Left cardiac atrium (tissue), 4 donors: ENCODE measurements at regions of chr11 and their contacts with region 1.

Region 1: GRCh38 chr11:111819161-111819828 is 52.1 kb downstream of the ALG9 start:
- DNase-seq: peak; percentile 55
- ATAC-seq: peak; percentile 87 to 88

Region 2: DNA sequence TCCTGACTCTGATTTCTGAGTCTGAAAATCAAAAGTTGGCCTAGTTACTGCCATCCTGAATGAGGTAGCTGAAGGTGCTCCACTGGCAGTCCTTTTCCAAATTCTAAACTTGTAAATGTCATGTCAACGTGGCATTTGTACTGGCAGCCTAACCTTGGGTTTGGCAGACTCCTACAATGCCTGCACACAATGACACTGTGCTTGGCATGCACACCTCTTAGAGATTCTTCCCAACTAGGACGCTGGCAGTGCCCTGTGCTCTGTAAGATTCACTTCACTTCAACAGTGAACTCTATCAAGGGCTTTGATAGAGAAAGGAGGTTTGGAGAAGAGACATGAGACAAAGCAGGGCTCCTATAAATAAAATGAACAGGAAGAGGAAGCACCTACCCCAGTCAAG is 31.2 kb before region 1 on chr11:
- intact Hi-C with region 1: loop called in 1 of 2 experiments (anchors 2 kb)
- DNase-seq: peak; percentile 65
- ATAC-seq: peak; percentile 92 to 94

Region 3: GRCh38 chr11:112241486-112241885 is 422.2 kb after region 1 on chr11:
- intact Hi-C with region 1: no loop called
- DNase-seq: no peak
- ATAC-seq: peak; percentile 67 to 71